HCT116 (cell line): ENCODE measurements at regions of chr6 and their contacts with region 1.

Region 1: DNA sequence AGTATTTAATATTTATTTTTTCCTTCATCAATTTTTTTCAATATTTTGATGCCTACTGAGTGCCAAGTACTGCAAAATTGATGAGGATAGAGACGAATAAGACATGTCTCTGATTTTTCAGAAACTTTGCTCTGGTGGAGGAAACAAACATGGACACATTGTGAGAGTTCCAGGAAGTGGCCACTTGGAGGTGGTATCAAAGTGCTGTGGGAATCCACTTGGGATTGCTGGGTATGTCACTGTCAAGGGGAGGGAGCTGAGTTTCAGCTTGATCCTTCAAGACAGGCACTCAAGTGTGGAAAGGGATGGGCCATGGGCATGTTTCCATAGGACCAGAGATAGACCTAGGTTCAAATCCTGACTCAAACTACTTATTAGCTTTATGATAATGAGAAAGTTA is 24.5 kb upstream of the ABCC10 start:
- DNase-seq: peak; percentile 13
- ATAC-seq: peak; percentile 89
- H3K4me3 ChIP-seq: no peak overlapping the region
- H3K27ac ChIP-seq: no peak overlapping the region
- H3K4me1 ChIP-seq: 0 out of 4 replicates have a peak, but pooled peaks cover 2 to 3% of the 10 kb centered on the region in 2 experiments
- H3K27me3 ChIP-seq: no peaks in the 10 kb centered on the region
- CTCF ChIP-seq: peak in 2 of 3 experiments; percentile 35 to 37; a peak in 4 of 6 replicates
- POLR2A ChIP-seq: no peak
- RAD21 ChIP-seq: peak; percentile 41

Region 2: DNA sequence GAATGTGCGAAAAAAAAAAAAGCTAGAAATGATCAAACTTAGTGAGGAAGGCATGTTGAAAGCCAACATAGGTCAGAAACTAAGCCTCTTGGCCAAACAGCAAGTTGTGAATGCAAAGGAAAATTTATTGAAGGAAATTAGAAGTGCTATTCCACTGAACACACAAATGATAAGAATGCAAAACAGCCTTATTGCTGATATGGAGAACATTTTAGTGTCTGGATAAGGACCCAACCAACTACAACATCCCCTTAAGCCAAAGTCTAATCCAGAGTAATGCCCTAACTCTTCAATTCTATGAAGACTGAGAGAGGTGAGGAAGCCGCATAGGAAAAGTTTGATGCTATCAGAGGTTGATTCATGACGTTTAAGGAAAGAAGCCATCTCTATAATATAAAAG is 19.0 kb after region 1 on chr6:
- CTCF ChIA-PET with region 1: interaction called, 4 read pairs
- POLR2A ChIA-PET with region 1: no interaction called
- RAD21 ChIA-PET with region 1: no interaction called
- intact Hi-C with region 1: loop called (anchors 1 kb)
- DNase-seq: no peak
- ATAC-seq: no peak
- H3K4me3 ChIP-seq: no peak overlapping the region
- H3K27ac ChIP-seq: no peak overlapping the region
- H3K4me1 ChIP-seq: peaks cover 0 to under 1% of the 10 kb centered on the region in 2 experiments; a peak in 2 of 4 replicates
- H3K27me3 ChIP-seq: no peaks in the 10 kb centered on the region
- CTCF ChIP-seq: no peak
- POLR2A ChIP-seq: no peak
- RAD21 ChIP-seq: no peak